HAP-1 (cell line): ENCODE measurements at regions of chr7 and their contacts with region 1.

Region 1: DNA sequence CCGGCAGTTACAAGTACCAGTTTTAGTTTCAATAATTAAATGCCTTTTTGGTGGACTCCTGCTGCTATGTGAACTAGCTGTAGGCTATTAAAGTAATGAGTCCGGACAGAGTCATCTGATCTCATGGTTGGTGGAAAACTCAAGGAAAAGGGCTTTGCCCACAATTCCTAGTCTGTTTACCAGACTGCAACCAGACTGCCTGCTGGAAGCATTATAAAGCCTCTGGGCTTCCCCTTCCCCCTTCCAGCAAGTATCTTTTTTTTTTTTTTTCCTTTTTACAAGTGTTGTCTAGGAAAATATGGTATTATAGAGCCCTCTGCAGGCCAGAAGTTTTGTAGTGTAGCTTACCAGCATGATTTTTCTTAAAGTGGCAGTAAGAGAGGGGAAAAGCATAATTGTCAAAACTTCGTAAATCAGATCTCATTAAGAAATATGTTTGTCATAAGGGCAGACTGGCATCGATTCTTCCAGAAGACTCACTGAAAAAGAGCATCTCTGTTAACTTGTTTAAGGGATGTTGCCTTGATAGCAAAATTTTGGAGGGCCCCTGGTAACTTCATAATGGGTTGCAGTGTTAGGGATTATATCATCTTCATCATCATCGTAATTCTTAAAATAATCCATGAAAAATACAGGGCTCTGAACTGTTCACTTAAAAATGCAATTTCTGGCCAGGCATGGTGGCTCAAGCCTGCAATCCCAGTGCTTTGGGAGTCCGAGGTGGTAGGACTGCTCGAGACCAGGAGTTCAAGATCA is 181.3 kb downstream of the TAX1BP1 start:
- DNase-seq: peak; percentile 75 to 88
- H3K4me3 ChIP-seq: no peak overlapping the region
- H3K4me1 ChIP-seq: peaks cover 11% of the 10 kb centered on the region
- H3K27me3 ChIP-seq: no peaks in the 10 kb centered on the region

Region 2: DNA sequence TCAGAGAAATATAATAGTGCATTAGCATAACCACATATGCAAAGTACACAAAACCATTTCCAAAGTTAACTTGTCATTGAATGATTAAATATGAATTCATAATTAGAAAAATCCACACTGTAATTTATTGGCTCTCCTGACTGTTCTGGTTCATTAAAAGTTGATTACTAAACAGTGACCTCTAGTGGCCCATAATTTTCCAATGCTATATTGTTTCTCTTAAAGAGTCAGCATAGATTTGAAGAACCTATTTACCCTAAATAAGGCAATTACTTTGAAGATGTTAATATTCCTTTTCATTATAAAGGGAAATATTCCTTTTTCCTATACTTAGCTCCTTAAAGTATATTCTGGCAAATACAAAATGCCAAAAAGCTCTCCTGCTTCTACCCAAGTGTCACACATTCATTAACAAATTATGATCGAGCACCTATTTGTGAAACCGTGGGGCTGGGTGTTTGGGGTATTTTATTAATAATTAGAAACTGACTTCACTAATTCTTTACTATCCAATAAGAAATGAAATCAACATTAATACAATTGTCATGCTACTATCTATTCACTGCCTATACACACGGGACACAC is 344.8 kb before region 1 on chr7:
- in situ Hi-C with region 1: loop called (anchors 25 kb)
- DNase-seq: peak in 1 of 2 experiments; percentile 61
- H3K4me3 ChIP-seq: no peak overlapping the region
- H3K4me1 ChIP-seq: peaks cover under 1% of the 10 kb centered on the region; the same call in 1 of the 2 replicates
- H3K27me3 ChIP-seq: no peaks in the 10 kb centered on the region